Psoas muscle (tissue), 8 donors: ENCODE measurements at regions of chr2 and their contacts with region 1.

Region 1: GRCh38 chr2:113138428-113139322 is 11.3 kb downstream of the IL1RN start:
- DNase-seq: no peak
- ATAC-seq: peak; percentile 42 to 71 (median 51)
- H3K4me3 ChIP-seq: no peak overlapping the region
- H3K27ac ChIP-seq: no peak overlapping the region
- H3K4me1 ChIP-seq: no peaks in the 10 kb centered on the region
- H3K27me3 ChIP-seq: no peaks in the 10 kb centered on the region
- CTCF ChIP-seq: peak; percentile 74

Region 2: DNA sequence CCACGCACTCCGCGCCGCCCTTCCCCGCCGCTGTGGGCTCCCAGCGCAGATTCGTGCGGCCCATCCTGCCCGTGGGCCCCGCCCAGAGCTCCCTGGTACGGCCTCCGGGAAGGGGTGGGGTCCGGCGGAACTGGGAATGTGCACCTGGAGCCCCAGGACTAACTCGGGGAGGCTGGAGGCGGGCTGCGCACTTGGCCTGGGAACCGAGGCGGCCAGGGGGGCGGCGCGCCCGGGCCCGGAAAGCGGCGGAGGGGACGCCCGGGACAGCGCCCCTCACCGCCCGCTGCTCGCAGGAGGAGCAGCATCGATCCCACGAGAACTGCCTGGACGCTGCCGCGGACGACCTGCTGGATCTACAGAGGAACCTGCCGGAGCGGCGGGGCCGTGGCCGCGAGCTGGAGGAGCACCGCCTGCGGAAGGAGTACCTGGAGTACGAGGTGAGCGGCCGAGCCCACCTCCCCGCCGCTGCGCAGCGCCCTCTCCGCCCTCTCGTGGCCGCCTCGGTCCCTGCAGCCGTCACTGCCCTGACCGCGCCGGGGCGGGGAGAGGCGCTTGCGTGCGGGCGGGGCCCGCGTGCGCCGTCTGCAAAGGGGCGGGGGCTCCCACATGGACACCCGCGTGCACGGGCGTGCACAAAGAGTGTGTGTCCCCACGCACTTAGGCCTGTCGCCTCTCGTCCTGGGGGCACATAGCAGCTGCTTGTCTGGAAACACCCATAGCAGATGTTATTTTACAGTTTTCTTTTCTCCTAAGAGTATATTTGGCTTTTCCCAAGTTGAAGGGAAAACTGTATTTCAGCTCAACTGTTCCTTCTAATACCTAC is 60.3 kb after region 1 on chr2:
- intact Hi-C with region 1: loop called in 1 of 2 experiments (anchors 5 kb)
- DNase-seq: peak; percentile 77 to 83
- ATAC-seq: peak; percentile 87 to 95 (median 93)
- H3K4me3 ChIP-seq: peak overlapping the region; percentile 78
- H3K27ac ChIP-seq: no peak overlapping the region
- H3K4me1 ChIP-seq: no peaks in the 10 kb centered on the region
- H3K27me3 ChIP-seq: peaks cover 0 to 3% (median 0%) of the 10 kb centered on the region in 3 donors
- CTCF ChIP-seq: peak; percentile 84

Region 3: DNA sequence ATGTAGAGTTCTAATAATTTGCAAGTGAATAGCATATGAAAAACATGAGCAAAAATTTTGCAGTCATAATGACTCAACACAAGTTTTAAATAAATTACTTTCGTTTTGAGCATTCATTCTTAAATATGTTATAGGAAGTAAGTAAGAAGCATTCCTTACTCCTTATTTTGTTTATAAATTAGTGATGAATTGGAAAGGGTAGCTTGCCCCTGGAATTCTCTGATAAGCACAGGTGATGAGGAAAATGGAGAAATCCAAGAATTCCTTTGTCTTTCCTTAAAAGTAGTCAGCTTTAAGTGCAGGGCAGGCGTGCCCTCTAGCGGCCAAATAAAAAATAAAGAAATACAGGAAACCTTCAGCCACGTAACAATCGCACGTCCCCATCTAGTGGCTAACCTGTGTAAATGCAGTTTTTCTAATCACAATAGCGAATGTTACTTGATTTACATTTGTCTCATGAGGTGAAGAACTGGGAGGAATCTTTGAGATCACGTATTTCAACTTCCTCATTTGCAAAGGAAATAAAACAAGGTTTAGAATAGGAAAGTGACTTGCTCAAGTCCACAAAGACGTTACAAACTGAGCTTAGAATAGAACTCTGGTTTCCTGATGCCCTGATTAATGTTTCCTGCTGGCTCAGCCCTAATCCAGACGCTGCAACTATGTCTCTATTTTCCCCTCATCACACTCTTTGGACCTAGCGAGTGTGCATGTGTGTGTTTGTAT is 251.6 kb after region 1 on chr2:
- intact Hi-C with region 1: loop called in 1 of 2 experiments (anchors 5 kb)
- DNase-seq: peak in 1 of 2 donors; percentile 29
- ATAC-seq: peak; percentile 68 to 92 (median 84)
- H3K4me3 ChIP-seq: peak overlapping the region; percentile 37
- H3K27ac ChIP-seq: no peak overlapping the region
- H3K4me1 ChIP-seq: no peaks in the 10 kb centered on the region
- H3K27me3 ChIP-seq: no peaks in the 10 kb centered on the region
- CTCF ChIP-seq: peak; percentile 90